ENCODE measurements at regions of chr1 and their contacts with region 1.

Region 1: DNA sequence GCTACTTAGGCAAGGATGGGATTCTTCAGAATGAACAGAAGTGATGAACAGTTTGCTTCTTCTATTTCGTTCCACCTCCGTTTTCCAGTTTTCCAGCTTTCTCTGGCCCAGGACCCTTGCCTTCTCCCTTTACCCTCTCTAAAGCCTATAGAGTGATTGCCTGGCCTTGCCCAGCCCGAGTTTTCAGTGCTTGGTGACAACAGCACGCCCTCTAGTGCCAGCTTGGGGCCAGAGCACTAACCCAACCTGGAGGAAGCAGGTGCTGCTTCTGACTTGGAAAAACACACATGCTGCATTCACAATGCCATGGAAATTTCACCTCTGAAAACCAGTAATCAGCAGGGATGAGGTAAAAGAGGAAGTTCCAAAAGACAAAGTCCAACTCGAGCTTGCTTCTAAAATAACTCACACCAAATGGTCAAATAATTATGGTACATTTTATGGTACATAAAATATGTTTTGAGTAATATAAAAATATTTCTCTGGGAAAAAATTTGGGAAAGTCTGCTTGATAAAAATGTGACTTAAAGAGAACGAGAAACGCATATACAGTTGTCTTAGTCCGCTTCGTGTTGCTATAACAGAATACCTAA is 26.1 kb downstream of the UBE2T start:
- DNase-seq: peak; percentile 82 to 85
- H3K4me3 ChIP-seq: no peak overlapping the region
- H3K4me3 Mint-ChIP-seq: no peak overlapping the region
- H3K27ac Mint-ChIP-seq: no peak overlapping the region
- H3K4me1 ChIP-seq: no peaks in the 10 kb centered on the region
- H3K4me1 Mint-ChIP-seq: no peaks in the 10 kb centered on the region
- H3K27me3 ChIP-seq: no peaks in the 10 kb centered on the region
- H3K27me3 Mint-ChIP-seq: peaks cover 6% of the 10 kb centered on the region
- CTCF ChIP-seq: peak; percentile 95 to 97

Region 2: DNA sequence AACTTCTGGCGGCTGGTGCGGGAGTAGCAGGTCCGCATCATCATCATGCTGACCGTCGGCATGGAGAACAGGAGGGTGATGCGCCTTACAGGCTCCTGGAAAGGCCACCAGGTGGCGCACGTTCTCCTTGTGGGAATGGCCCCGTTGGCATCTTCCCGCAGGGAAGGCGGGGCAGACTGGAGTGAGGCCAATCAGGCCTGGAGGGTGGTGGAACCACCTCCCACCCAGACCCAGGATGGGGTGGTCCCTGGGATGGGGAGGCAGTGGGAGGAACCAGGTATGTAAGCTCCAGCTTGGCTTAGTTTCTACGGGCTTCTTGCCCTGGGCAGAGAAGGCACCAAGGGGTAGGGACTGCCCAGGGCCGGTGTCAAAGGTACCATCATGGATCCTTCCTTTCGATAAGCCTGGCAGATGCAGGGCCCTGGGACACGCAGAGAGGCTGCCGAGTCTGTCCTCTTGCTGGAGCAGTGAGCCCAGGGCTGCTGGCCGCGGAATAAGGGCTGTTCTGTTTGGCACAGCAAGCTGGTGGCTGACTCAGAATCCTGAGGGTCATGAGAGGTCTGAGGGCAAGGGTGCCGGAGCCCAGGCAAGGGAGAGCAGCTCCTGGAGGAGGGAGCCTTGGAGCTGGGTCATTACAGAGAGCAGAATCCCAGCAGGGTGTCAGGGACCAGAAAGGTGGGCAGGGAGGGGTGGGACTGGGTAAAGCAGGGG is 130.8 kb before region 1 on chr1:
- CTCF ChIA-PET with region 1: interaction called, 23 read pairs
- POLR2A ChIA-PET with region 1: interaction called, 3 read pairs
- intact Hi-C with region 1: loop called (anchors 1 kb)
- DNase-seq: peak; percentile 87 to 89
- H3K4me3 ChIP-seq: no peak overlapping the region
- H3K4me3 Mint-ChIP-seq: no peak overlapping the region
- H3K27ac Mint-ChIP-seq: no peak overlapping the region
- H3K4me1 ChIP-seq: peaks cover 9% of the 10 kb centered on the region
- H3K4me1 Mint-ChIP-seq: peaks cover 15% of the 10 kb centered on the region
- H3K27me3 ChIP-seq: no peaks in the 10 kb centered on the region
- H3K27me3 Mint-ChIP-seq: peaks cover 2% of the 10 kb centered on the region
- CTCF ChIP-seq: peak; percentile 88 to 92

Region 3: DNA sequence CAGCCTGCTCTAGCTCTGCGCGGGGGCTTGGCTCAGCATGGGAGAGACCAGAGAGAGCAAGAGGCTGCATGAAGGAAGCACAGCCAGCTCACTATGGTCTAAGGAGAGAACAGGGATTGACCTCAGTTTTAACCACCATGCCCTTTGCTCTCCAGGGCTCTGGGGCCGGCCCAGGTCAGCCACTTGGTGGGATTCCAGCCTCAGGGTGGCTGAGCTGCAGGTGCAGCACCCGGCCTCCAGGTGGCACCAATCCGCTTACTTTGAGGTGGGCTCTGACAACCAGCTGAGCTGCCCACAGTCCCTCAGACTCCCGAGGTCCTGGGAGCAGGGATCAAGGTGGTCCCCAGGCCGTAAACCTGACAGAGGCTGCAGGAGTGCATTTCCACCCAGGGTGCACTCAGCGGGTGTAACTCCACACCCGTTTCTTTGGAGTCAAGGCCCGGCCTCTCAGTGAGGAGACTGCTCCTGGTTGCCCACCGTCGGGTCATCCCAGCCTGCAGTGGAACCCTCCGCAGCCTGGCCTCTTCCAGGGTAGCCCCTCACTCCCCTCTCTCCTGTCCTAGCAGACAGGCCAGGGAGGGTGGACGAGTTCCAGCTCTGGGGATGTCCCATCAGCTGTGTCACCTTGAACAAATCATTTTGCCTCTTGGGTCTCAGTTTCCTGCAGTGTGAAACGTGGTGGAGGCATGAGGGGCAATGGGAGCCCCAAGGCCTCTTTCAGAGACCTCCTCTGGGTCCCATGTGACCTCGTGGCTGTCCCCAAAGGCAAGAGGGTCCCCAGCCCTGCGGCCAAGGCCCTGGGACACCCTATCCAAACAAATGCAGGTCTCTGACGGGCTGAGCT is 122.7 kb before region 1 on chr1:
- CTCF ChIA-PET with region 1: interaction called, 23 read pairs
- POLR2A ChIA-PET with region 1: interaction called, 3 read pairs
- intact Hi-C with region 1: loop called (anchors 1 kb)
- DNase-seq: peak; percentile 78 to 80
- H3K4me3 ChIP-seq: no peak overlapping the region
- H3K4me3 Mint-ChIP-seq: no peak overlapping the region
- H3K27ac Mint-ChIP-seq: no peak overlapping the region
- H3K4me1 ChIP-seq: peaks cover 21% of the 10 kb centered on the region
- H3K4me1 Mint-ChIP-seq: peaks cover 17% of the 10 kb centered on the region
- H3K27me3 ChIP-seq: no peaks in the 10 kb centered on the region
- H3K27me3 Mint-ChIP-seq: no peaks in the 10 kb centered on the region
- CTCF ChIP-seq: peak; percentile 83 to 85

Region 4: GRCh38 chr1:202213361-202214088 is 102.1 kb before region 1 on chr1:
- CTCF ChIA-PET with region 1: no interaction called
- POLR2A ChIA-PET with region 1: no interaction called
- intact Hi-C with region 1: loop called (anchors 1 kb)
- DNase-seq: peak; percentile 37 to 46
- H3K4me3 ChIP-seq: no peak overlapping the region
- H3K4me3 Mint-ChIP-seq: peak overlapping the region; percentile 42
- H3K27ac Mint-ChIP-seq: no peak overlapping the region
- H3K4me1 ChIP-seq: no peaks in the 10 kb centered on the region
- H3K4me1 Mint-ChIP-seq: peaks cover 6% of the 10 kb centered on the region
- H3K27me3 ChIP-seq: no peaks in the 10 kb centered on the region
- H3K27me3 Mint-ChIP-seq: peaks cover 4% of the 10 kb centered on the region
- CTCF ChIP-seq: peak; percentile 25 to 37

Region 5: DNA sequence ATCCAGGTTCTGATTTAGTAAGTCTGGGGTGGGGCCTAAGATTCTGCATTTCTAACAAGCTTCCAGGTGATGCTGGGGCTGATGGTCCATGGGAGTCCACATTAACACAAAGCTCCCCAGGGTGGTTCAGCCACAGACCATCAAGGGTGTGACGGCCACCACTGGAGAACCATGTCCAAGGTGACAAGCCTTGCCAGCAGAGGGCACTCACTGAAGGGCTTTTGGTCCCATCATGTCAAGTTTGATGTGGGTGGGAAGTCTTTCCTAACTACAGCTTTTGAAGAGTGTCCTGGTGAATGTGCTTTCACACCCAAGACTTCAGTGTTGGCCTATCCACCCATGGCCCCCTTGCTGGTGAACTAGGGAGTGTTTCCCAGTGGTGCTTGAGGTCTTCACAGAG is 41.1 kb before region 1 on chr1:
- CTCF ChIA-PET with region 1: interaction called, 3 read pairs
- POLR2A ChIA-PET with region 1: no interaction called
- intact Hi-C with region 1: loop called (anchors 1 kb)
- DNase-seq: peak in 1 of 2 experiments; percentile 42
- H3K4me3 ChIP-seq: no peak overlapping the region
- H3K4me3 Mint-ChIP-seq: no peak overlapping the region
- H3K27ac Mint-ChIP-seq: no peak overlapping the region
- H3K4me1 ChIP-seq: no peaks in the 10 kb centered on the region
- H3K4me1 Mint-ChIP-seq: no peaks in the 10 kb centered on the region
- H3K27me3 ChIP-seq: no peaks in the 10 kb centered on the region
- H3K27me3 Mint-ChIP-seq: peaks cover 15% of the 10 kb centered on the region
- CTCF ChIP-seq: peak in 1 of 2 experiments; percentile 63